Body of pancreas (tissue), 4 donors: ENCODE measurements at regions of chr3 and their contacts with region 1.

Region 1: DNA sequence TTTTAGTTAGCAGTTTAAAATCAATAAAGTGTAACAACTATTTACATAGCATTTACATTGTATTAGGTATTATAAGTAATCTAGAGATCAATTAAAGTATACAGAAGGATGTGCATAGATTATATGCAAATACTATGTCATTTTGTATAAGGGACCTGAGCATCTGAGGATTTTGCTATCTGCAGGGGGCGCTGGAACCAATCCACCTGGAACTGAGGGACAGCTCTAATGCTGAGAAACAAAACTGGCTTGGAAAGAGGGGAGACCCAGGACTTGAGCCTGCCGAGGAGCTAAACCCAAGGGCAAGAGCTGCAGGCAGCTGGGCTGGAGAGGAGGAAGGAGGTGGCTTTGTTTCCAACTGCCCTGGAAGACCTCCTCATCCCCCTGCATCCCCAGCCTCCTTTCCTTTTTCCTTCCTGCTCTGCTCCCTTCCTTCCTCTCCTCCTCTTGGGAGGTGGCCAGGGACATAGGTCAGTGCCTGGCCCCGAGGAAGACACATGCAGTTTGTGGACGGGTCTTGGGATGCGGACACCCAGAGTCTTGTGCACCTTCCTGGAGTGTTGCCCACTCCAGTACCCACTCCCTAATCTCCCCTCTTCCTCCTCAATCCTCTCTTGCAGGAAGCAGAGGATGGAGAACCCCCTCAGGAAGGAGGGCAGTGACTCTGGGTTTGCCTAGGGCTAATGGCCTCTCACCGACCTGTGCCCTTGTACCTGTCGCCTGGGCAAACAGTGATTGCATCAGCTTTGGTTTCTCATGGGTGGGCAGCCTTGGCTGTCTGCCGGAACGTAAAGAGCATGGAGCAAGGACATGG is 828 bp upstream of the RTP3 start:
- DNase-seq: no peak
- ATAC-seq: no peak
- H3K4me3 ChIP-seq: no peak overlapping the region
- H3K27ac ChIP-seq: no peak overlapping the region
- H3K4me1 ChIP-seq: no peaks in the 10 kb centered on the region
- H3K27me3 ChIP-seq: no peaks in the 10 kb centered on the region
- CTCF ChIP-seq: peak in 2 of 7 experiments; percentile 9 to 16
- POLR2A ChIP-seq: no peak

Region 2: DNA sequence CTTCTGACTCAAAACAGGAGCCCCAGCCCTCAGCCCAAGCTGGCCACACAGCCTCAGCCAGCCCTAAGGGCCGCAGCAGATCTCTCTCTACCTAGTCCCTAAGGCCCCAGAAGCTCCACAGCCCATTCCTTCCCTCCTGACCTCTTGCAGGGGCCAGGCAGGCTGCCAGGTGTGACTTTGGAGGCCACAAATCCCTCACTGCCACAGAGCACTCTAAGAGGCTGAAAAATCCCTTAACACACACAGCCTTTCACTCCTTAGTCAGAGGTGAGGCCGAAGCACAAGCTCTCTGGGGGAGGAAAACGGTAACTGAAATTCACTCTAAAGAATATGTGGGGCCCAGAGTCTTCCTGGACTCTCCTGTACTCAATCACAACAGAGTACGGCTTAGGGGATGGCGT is 45.9 kb after region 1 on chr3:
- intact Hi-C with region 1: no loop called
- DNase-seq: no peak
- ATAC-seq: no peak
- H3K4me3 ChIP-seq: no peak overlapping the region
- H3K27ac ChIP-seq: no peak overlapping the region
- H3K4me1 ChIP-seq: no peaks in the 10 kb centered on the region
- H3K27me3 ChIP-seq: no peaks in the 10 kb centered on the region
- CTCF ChIP-seq: no peak
- POLR2A ChIP-seq: no peak

Region 3: DNA sequence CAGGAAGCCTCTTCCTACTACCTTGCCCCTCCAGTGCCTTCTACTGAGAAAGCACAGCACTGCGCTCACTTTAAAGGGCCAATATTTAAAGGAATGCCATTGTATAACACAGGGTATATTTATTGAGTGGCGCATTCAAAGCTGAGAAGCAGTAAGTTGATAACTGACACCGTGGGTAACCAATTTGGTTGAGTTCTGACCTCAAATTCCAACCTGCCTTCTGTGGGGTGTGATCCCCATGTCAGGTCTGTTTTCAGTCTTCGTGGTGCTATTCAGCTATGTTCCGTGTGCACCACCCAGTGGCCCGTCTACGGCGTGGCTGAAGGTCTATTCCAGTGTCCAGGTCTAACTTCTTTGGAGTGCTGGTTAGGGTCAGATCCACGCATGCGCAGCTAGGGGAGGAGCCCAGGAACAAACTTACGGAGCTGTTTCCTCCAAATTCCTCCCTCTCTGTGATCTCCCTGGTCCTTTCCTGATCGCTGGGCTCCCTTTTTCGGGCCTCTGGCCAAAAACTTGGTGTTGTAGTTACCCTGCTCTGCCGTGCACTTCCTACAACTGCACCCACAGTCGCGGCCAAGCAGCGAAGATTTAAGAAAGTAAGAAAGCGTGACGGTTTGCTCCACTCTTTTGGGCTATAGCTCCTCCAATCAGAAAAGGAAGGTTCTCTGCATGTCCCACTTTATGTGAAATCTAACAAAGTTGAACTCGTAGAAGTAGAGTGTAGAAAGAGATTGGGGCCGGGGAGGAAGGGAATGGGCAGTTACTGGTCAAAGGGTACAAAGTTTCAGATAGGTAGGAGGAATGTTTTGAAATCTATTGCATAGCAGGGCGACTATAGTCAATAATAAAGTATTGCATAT is 61.5 kb after region 1 on chr3:
- intact Hi-C with region 1: loop called (anchors 10 kb)
- DNase-seq: peak; percentile 94 to 97 (median 96)
- ATAC-seq: peak; percentile 99
- H3K4me3 ChIP-seq: peak overlapping the region in 1 of 2 donors; percentile 1
- H3K27ac ChIP-seq: peak overlapping the region; percentile 23 to 71 (median 62)
- H3K4me1 ChIP-seq: peaks cover 11% of the 10 kb centered on the region
- H3K27me3 ChIP-seq: no peaks in the 10 kb centered on the region
- CTCF ChIP-seq: peak; percentile 49 to 94 (median 82)
- POLR2A ChIP-seq: peak in 1 of 3 donors; percentile 45